Mammary epithelial cell (primary cell): ENCODE measurements at regions of chr17 and their contacts with region 1.

Region 1: DNA sequence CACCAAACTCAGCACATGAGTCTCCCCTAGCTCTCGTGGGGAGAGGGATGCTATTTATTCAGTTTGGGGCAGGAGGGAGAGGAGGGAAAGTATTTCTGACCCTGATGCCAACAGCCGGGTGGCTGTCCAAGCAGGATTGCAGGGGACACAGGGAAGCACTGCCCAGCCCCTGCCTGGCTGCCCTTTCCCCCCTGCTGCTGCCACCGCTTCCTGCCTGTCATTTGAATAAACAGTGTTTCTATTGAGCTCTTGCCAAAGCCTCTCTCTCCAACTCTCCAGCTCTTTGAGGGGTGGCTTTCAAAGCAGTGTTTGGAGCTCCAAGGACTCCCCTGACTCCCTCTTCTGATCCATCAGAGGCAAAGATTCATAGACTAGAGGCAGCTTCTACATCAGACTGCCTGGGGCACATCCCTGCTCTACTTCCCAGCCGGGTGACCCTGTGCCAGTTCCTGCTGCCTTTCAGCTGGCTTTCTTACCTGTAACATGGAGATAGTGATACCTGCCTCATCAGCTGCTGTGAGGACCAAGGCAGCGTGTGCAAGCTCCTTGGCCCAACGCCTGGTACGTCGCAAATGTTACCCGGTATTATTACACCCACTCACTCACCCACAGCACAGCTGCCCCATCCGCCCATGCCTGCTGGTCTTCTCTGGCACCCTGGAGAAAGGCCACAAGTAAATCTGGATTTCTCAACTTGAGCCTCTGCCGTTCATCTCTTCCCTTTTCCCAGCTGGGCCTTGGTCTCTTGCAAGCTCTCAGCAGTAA is 9.5 kb downstream of the PROCA1 start:
- DNase-seq: no peak
- H3K4me3 ChIP-seq: no peak overlapping the region
- H3K27ac ChIP-seq: no peak overlapping the region
- H3K4me1 ChIP-seq: no peaks in the 10 kb centered on the region
- H3K27me3 ChIP-seq: no peaks in the 10 kb centered on the region
- CTCF ChIP-seq: no peak

Region 2: GRCh38 chr17:28635506-28635905 is 66.7 kb before region 1 on chr17:
- CTCF ChIA-PET with region 1: no interaction called
- dilution Hi-C with region 1: loop called (anchors 5 kb)
- in situ Hi-C with region 1: no loop called
- intact Hi-C with region 1: no loop called
- DNase-seq: no peak
- H3K4me3 ChIP-seq: no peak overlapping the region
- H3K27ac ChIP-seq: no peak overlapping the region
- H3K4me1 ChIP-seq: no peaks in the 10 kb centered on the region
- H3K27me3 ChIP-seq: no peaks in the 10 kb centered on the region
- CTCF ChIP-seq: no peak

Region 3: GRCh38 chr17:28669918-28670317 is 32.3 kb before region 1 on chr17:
- CTCF ChIA-PET with region 1: no interaction called
- dilution Hi-C with region 1: loop called (anchors 5 kb)
- in situ Hi-C with region 1: no loop called
- intact Hi-C with region 1: no loop called
- DNase-seq: no peak
- H3K4me3 ChIP-seq: no peak overlapping the region
- H3K27ac ChIP-seq: no peak overlapping the region
- H3K4me1 ChIP-seq: peaks cover 8% of the 10 kb centered on the region
- H3K27me3 ChIP-seq: no peaks in the 10 kb centered on the region
- CTCF ChIP-seq: no peak